ENCODE measurements at regions of chr11 and their contacts with region 1.

Region 1: GRCh38 chr11:122007601-122008071 is 108.4 kb downstream of the BLID start:
- DNase-seq: no peak
- H3K4me3 ChIP-seq: no peak overlapping the region
- H3K27ac ChIP-seq: no peak overlapping the region
- H3K4me1 ChIP-seq: no peaks in the 10 kb centered on the region
- H3K27me3 ChIP-seq: no peaks in the 10 kb centered on the region
- CTCF ChIP-seq: no peak

Region 2: DNA sequence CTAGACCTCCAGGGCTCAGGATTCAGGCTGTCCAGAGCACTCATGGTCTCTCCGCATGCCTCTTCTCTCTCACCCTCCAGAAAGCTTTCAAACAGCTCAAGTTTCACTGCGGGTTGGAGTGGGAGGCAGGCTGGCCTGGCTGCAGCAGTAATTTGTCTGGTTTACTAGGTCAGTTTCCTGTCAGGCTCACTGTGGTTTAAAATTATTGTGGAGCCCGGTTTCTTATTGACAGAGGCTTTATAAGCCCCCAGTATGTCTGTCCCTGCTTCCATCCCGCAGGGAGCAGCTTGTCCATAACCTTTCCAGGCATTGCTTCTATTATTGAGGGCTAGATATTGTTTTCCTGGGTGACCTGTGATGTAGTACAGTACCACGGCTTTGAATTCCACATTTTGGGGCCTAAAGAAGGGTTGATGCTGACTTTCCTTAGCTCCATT is 319.6 kb before region 1 on chr11:
- CTCF ChIA-PET with region 1: no interaction called
- POLR2A ChIA-PET with region 1: no interaction called
- intact Hi-C with region 1: no loop called
- DNase-seq: no peak
- H3K4me3 ChIP-seq: no peak overlapping the region
- H3K27ac ChIP-seq: no peak overlapping the region
- H3K4me1 ChIP-seq: no peaks in the 10 kb centered on the region
- H3K27me3 ChIP-seq: no peaks in the 10 kb centered on the region
- CTCF ChIP-seq: no peak

Region 3: GRCh38 chr11:121870206-121871045 is 137.2 kb before region 1 on chr11:
- CTCF ChIA-PET with region 1: no interaction called
- POLR2A ChIA-PET with region 1: no interaction called
- intact Hi-C with region 1: no loop called
- DNase-seq: peak; percentile 42
- H3K4me3 ChIP-seq: no peak overlapping the region
- H3K27ac ChIP-seq: no peak overlapping the region
- H3K4me1 ChIP-seq: no peaks in the 10 kb centered on the region
- H3K27me3 ChIP-seq: no peaks in the 10 kb centered on the region
- CTCF ChIP-seq: peak; percentile 54

Region 4: GRCh38 chr11:121894581-121894980 is 113.1 kb before region 1 on chr11:
- CTCF ChIA-PET with region 1: no interaction called
- POLR2A ChIA-PET with region 1: interaction called, 11 read pairs
- intact Hi-C with region 1: no loop called
- DNase-seq: no peak
- H3K4me3 ChIP-seq: no peak overlapping the region
- H3K27ac ChIP-seq: no peak overlapping the region
- H3K4me1 ChIP-seq: peaks cover 11% of the 10 kb centered on the region
- H3K27me3 ChIP-seq: no peaks in the 10 kb centered on the region
- CTCF ChIP-seq: no peak